ENCODE measurements at regions of chr12 and their contacts with region 1.

Region 1: DNA sequence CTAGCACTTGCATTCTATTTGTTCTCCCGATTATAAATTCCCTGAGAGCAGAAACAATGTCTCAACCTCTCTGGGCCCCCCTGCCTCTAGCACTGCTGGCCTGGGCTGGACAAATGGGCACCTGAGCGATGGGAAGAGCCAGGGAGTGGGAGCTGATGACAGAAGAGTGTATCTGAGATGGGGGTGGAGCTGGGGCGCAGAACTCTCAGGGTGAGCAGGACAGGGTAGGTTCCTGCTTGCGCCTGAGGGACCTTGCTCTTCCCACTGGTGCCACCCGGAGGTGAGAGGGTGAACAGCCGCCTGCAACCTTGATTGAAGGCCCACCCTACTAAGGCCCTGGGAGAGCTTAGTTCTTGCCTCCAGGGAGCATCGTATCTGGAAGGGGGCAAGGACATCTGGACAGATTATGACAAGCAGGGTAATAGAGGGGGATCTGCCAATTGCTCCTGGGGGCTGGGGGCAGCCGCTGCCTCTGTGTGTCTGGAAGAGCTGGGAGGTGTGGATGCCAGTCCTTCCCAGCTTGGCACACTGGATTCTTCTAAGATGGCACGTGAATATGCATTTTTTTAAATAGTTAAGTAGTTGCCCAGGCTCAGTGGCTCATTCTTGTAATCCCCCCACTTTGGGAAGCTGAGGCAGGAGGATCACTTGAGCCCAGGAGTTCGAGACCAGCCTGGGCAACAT is 43.0 kb upstream of the TSPAN9 start:
- DNase-seq: peak; percentile 46
- H3K4me3 ChIP-seq: no peak overlapping the region
- H3K27ac ChIP-seq: no peak overlapping the region
- H3K4me1 ChIP-seq: no peaks in the 10 kb centered on the region
- H3K27me3 ChIP-seq: no peaks in the 10 kb centered on the region
- CTCF ChIP-seq: peak; percentile 63 to 71

Region 2: GRCh38 chr12:2842948-2843347 is 191.3 kb before region 1 on chr12:
- CTCF ChIA-PET with region 1: no interaction called
- dilution Hi-C with region 1: no loop called
- in situ Hi-C with region 1: no loop called
- intact Hi-C with region 1: no loop called
- DNase-seq: no peak
- H3K4me3 ChIP-seq: no peak overlapping the region
- H3K27ac ChIP-seq: no peak overlapping the region
- H3K4me1 ChIP-seq: no peaks in the 10 kb centered on the region
- H3K27me3 ChIP-seq: no peaks in the 10 kb centered on the region
- CTCF ChIP-seq: no peak

Region 3: GRCh38 chr12:2853626-2854025 is 180.6 kb before region 1 on chr12:
- CTCF ChIA-PET with region 1: no interaction called
- dilution Hi-C with region 1: no loop called
- in situ Hi-C with region 1: no loop called
- intact Hi-C with region 1: loop called (anchors 1 kb)
- DNase-seq: peak; percentile 35
- H3K4me3 ChIP-seq: no peak overlapping the region
- H3K27ac ChIP-seq: no peak overlapping the region
- H3K4me1 ChIP-seq: no peaks in the 10 kb centered on the region
- H3K27me3 ChIP-seq: no peaks in the 10 kb centered on the region
- CTCF ChIP-seq: peak; percentile 84 to 91

Region 4: GRCh38 chr12:2959505-2960389 is 74.5 kb before region 1 on chr12:
- CTCF ChIA-PET with region 1: interaction called, 4 read pairs
- dilution Hi-C with region 1: no loop called
- in situ Hi-C with region 1: no loop called
- intact Hi-C with region 1: loop called (anchors 2 kb)
- DNase-seq: peak; percentile 60
- H3K4me3 ChIP-seq: peak overlapping the region; percentile 43 to 74 (median 71)
- H3K27ac ChIP-seq: peak overlapping the region; percentile 40
- H3K4me1 ChIP-seq: peaks cover 24% of the 10 kb centered on the region
- H3K27me3 ChIP-seq: no peaks in the 10 kb centered on the region
- CTCF ChIP-seq: no peak

Region 5: DNA sequence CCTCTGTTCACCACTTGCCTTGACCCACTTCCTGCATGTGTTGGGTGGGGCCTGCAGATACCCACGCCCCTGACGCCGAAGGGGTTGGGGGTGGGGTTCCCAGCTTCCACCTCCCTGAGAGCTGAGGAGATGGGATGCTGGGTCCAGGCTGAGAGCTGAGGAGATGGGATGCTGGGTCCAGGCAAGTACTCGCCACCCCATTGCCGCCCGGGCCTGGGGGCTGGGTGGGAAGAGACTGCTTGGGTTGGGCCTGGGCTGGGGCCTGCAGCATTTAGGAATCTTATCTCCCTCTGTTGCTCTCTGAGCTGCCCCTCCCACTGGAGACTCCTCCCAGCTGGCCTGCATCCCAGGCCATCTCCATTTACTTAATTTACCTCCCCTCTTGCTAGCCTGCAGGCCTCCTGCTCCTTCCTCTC is 57.6 kb before region 1 on chr12:
- CTCF ChIA-PET with region 1: no interaction called
- dilution Hi-C with region 1: loop called (anchors 5 kb)
- in situ Hi-C with region 1: no loop called
- intact Hi-C with region 1: no loop called
- DNase-seq: no peak
- H3K4me3 ChIP-seq: no peak overlapping the region
- H3K27ac ChIP-seq: no peak overlapping the region
- H3K4me1 ChIP-seq: no peaks in the 10 kb centered on the region
- H3K27me3 ChIP-seq: no peaks in the 10 kb centered on the region
- CTCF ChIP-seq: no peak

Region 6: GRCh38 chr12:2998789-2999264 is 35.4 kb before region 1 on chr12:
- CTCF ChIA-PET with region 1: no interaction called
- dilution Hi-C with region 1: no loop called
- in situ Hi-C with region 1: no loop called
- intact Hi-C with region 1: no loop called
- DNase-seq: no peak
- H3K4me3 ChIP-seq: no peak overlapping the region
- H3K27ac ChIP-seq: no peak overlapping the region
- H3K4me1 ChIP-seq: peaks cover 6% of the 10 kb centered on the region
- H3K27me3 ChIP-seq: no peaks in the 10 kb centered on the region
- CTCF ChIP-seq: no peak

Measured in mammary epithelial cell (primary cell).